Panc1 (cell line): ENCODE measurements at regions of chr3 and their contacts with region 1.

Region 1: DNA sequence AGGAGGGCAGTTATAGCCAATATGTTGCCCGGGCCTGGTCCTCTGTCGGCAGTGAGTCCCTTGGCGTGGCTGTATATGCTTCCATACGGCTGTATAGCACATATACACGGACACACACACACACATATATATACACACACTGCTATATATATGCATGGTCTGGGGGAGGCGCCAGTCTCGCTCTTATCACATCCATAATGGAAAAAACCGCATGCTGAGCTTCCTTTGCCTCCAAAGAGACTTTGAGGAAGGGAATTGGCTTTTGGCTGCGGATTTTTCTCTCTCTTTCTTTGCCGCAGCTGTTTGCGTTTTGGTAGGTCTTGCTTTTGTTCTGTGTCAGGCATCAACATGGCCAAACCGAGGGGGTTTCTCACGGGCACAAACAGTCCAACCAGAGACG is 11.3 kb upstream of the TMEM115 start:
- DNase-seq: no peak
- ATAC-seq: no peak
- H3K4me3 ChIP-seq: no peak overlapping the region
- H3K27ac ChIP-seq: no peak overlapping the region
- H3K4me1 ChIP-seq: no peaks in the 10 kb centered on the region; the same call in 1 of the 2 replicates
- H3K27me3 ChIP-seq: no peaks in the 10 kb centered on the region
- CTCF ChIP-seq: no peak; the same call in 1 of the 2 replicates

Region 2: GRCh38 chr3:50338965-50339364 is 31.6 kb before region 1 on chr3:
- CTCF ChIA-PET with region 1: no interaction called
- POLR2A ChIA-PET with region 1: interaction called, 14 read pairs
- in situ Hi-C with region 1: no loop called
- intact Hi-C with region 1: no loop called
- DNase-seq: no peak
- ATAC-seq: no peak
- H3K4me3 ChIP-seq: no peak overlapping the region
- H3K27ac ChIP-seq: no peak overlapping the region
- H3K4me1 ChIP-seq: peaks cover 14% of the 10 kb centered on the region; the same call in 1 of the 2 replicates
- H3K27me3 ChIP-seq: no peaks in the 10 kb centered on the region
- CTCF ChIP-seq: no peak

Region 3: DNA sequence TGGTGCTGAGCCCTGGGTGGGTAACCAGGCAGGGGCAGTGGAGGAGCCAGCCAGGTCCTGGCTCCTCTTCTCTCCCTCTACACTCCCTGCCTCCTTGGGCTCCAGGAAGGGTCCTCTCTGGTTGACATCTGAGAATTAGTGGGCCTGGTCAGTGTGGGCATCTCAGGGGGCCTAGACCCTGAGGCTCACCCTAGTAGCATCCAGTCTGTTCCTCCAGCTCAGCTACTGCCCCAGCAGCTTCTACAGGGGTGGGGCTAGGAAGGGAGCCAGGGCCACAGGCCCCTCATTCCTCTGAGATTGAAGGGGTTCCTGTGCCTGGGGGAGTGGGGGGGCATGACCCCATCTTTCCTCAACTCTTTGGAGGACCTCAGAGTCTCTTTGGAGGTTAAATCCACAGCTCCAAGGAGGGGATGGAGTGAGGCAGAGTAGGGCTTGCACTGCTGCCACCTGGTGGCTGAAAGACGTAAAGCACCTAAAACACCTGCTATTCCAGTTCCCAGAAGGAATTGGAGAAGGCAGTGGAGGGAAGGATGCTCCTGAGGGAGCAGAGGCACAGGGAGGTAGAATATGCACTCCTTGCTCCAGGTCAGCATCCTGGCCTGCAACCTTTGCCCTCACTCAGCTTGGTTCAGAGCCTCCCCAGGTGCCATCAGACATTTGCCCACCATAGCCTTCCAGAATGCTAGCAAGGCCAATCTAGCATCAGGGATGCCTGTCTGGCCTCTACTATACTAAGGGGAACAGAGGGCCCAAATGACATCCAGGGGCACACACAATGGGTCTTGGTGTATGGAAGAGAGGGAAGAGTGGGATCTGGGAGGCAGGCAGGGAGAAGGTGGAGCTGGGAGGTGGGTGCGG is 171.8 kb after region 1 on chr3:
- CTCF ChIA-PET with region 1: interaction called, 8 read pairs
- POLR2A ChIA-PET with region 1: no interaction called
- in situ Hi-C with region 1: no loop called
- intact Hi-C with region 1: loop called (anchors 10 kb)
- DNase-seq: peak; percentile 45
- ATAC-seq: peak; percentile 89
- H3K4me3 ChIP-seq: no peak overlapping the region
- H3K27ac ChIP-seq: no peak overlapping the region
- H3K4me1 ChIP-seq: no peaks in the 10 kb centered on the region
- H3K27me3 ChIP-seq: no peaks in the 10 kb centered on the region
- CTCF ChIP-seq: peak; percentile 85

Region 4: GRCh38 chr3:51401735-51402134 is 1031.1 kb after region 1 on chr3:
- CTCF ChIA-PET with region 1: no interaction called
- POLR2A ChIA-PET with region 1: no interaction called
- in situ Hi-C with region 1: no loop called
- intact Hi-C with region 1: no loop called
- DNase-seq: no peak
- ATAC-seq: no peak
- H3K4me3 ChIP-seq: no peak overlapping the region
- H3K27ac ChIP-seq: no peak overlapping the region
- H3K4me1 ChIP-seq: no peaks in the 10 kb centered on the region
- H3K27me3 ChIP-seq: no peaks in the 10 kb centered on the region
- CTCF ChIP-seq: no peak